ENCODE measurements at regions of chr18 and their contacts with region 1.

Region 1: GRCh38 chr18:61901323-61901986 is 8.6 kb upstream of the RNF152 start:
- DNase-seq: peak; percentile 53
- ATAC-seq: peak; percentile 97
- H3K4me3 ChIP-seq: no peak overlapping the region
- H3K27ac ChIP-seq: no peak overlapping the region
- H3K4me1 ChIP-seq: no peaks in the 10 kb centered on the region
- H3K27me3 ChIP-seq: 0 out of 2 replicates have a peak, but pooled peaks cover 3% of the 10 kb centered on the region
- CTCF ChIP-seq: peak; percentile 55 to 97 (median 94); a peak in 5 of 6 replicates
- POLR2A ChIP-seq: no peak
- RAD21 ChIP-seq: peak; percentile 64

Region 2: GRCh38 chr18:61551586-61551985 is 349.9 kb before region 1 on chr18:
- CTCF ChIA-PET with region 1: no interaction called
- POLR2A ChIA-PET with region 1: no interaction called
- RAD21 ChIA-PET with region 1: no interaction called
- intact Hi-C with region 1: loop called (anchors 2 kb)
- DNase-seq: peak; percentile 79
- ATAC-seq: peak; percentile 87
- H3K4me3 ChIP-seq: no peak overlapping the region
- H3K27ac ChIP-seq: no peak overlapping the region
- H3K4me1 ChIP-seq: peaks cover 0 to 3% of the 10 kb centered on the region in 2 experiments; a peak in 2 of 4 replicates
- H3K27me3 ChIP-seq: no peaks in the 10 kb centered on the region
- CTCF ChIP-seq: peak; percentile 53 to 85 (median 79); a peak in 5 of 6 replicates
- POLR2A ChIP-seq: no peak
- RAD21 ChIP-seq: peak; percentile 73

Region 3: GRCh38 chr18:61635901-61636528 is 265.4 kb before region 1 on chr18:
- CTCF ChIA-PET with region 1: interaction called, 5 read pairs
- POLR2A ChIA-PET with region 1: no interaction called
- RAD21 ChIA-PET with region 1: no interaction called
- intact Hi-C with region 1: loop called (anchors 5 kb)
- DNase-seq: peak; percentile 29
- ATAC-seq: peak; percentile 90
- H3K4me3 ChIP-seq: no peak overlapping the region
- H3K27ac ChIP-seq: no peak overlapping the region
- H3K4me1 ChIP-seq: peaks cover 3 to 4% of the 10 kb centered on the region in 2 experiments; a peak in 1 of 4 replicates
- H3K27me3 ChIP-seq: no peaks in the 10 kb centered on the region
- CTCF ChIP-seq: peak; percentile 56 to 94 (median 87); a peak in 5 of 6 replicates
- POLR2A ChIP-seq: no peak
- RAD21 ChIP-seq: peak; percentile 69

Region 4: DNA sequence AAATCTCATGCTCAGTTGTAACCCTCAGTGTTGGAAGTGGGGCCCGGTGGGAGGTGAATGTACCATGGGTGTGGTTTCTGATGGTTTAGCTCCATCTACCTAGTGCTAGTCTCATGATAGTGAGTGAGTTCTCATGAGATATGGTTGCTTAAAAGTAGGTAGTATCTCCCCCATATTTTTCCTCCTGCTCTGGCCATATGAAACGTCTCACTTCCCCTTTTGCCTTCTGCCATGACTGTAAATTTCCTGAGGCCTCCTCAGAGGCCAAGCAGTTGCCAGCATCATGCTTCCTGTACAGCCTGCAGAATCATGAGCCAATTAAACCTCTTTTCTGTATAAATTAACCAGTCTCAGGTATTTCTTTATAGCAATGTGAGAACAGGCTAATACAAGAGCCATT is 54.2 kb after region 1 on chr18:
- CTCF ChIA-PET with region 1: no interaction called
- POLR2A ChIA-PET with region 1: no interaction called
- RAD21 ChIA-PET with region 1: no interaction called
- intact Hi-C with region 1: no loop called
- DNase-seq: no peak
- ATAC-seq: no peak
- H3K4me3 ChIP-seq: no peak overlapping the region
- H3K27ac ChIP-seq: no peak overlapping the region
- H3K4me1 ChIP-seq: no peaks in the 10 kb centered on the region
- H3K27me3 ChIP-seq: no peaks in the 10 kb centered on the region
- CTCF ChIP-seq: no peak
- POLR2A ChIP-seq: no peak
- RAD21 ChIP-seq: no peak